ENCODE measurements at regions of chr1 and their contacts with region 1.

Region 1: GRCh38 chr1:201530741-201531531 is 8.0 kb upstream of the NAV1 start:
- DNase-seq: peak; percentile 51

Region 2: DNA sequence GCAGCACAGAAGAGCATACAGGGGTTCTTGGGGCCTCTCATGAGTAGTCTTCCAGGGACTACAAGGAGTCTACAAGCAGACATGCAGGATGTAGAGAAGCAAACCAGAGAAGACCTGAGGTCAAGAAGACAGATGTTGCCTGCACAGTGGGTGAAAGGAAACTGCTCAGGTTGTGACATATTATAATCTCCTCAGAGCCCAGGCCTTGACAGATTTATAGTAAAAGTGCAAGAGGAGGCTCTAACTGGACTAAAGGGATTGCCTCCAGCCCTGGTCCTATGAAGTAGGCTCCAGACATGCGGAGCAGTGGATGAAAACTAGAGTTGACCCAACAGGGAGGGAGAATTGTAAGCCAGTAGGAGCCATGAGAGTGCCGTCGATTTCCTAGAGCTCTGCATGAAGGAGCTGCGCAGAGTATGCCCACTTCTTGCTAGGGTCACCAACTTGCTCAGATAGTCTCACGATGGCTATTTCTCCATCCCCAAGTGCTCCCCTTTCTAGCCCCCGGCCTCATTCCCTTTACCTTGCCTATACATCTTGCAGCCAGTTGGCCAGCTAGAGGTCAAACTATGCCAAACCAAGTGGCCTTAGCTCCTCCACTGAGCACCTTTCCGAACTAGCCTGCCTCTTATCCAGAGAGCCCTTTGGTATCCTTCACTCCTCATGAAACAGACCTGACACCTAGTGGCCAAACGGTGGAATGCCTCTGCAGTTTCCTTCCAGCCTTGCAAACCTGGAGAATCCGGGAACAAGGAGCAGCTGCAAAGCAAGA is 261.8 kb after region 1 on chr1:
- in situ Hi-C with region 1: loop called (anchors 25 kb)
- DNase-seq: peak; percentile 82